Activated CD8-positive, alpha-beta memory T cell treated with anti-CD3 and anti-CD28 coated beads, Interleukin-2, amount 10 ng/mL, durations not matched to agents 7 days and 5 days (primary cell): ENCODE measurements at regions of chr7 and their contacts with region 1.

Region 1: DNA sequence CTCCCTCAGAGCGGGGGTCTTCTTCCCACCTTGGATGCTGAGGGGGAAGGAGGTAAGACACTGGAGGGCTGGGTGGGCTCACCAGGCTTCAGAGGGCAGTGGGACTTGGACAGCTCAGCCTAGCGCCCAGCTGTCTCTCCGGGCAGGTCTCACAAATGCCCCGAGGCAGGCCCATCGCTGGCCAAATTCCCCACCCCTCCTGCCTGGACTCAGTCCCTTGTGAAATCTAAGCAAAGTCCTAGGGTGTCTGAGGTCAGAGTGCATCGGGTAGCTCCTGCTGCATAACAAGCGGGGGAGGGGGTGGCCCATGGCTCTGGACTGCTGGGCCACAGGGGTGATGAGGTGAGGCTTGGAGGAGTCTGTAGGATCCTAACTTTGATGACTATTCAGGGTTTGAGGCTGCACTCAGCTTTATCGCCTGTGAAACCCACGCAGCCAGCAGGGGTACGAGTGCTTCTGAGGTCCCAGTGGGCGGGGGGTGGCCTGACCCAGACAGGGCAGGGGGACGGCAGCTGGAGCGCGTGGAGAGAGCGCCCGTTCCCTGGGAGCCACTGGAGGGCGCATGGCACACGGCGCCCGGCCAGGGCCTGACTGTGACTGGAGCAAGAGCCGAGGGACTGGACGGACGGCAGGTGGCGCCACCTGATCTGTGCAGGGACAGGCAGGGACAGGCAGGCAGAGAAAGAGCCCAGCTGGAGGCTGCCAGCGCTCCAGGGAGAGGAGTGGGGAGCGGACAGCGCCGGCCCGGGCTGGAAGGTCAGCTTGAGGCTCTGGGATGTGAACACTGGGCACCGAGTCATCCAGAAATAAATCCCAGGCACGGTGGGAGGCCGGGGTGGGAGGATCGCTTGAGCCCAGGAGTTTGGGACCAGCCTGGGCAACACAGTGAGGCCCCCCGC is 10.0 kb downstream of the CYP2W1 start:
- DNase-seq: peak; percentile 96
- ATAC-seq: peak; percentile 99
- H3K4me3 Mint-ChIP-seq: no peak overlapping the region
- H3K27ac Mint-ChIP-seq: no peak overlapping the region
- H3K4me1 Mint-ChIP-seq: peaks cover 6% of the 10 kb centered on the region
- H3K27me3 Mint-ChIP-seq: no peaks in the 10 kb centered on the region

Region 2: DNA sequence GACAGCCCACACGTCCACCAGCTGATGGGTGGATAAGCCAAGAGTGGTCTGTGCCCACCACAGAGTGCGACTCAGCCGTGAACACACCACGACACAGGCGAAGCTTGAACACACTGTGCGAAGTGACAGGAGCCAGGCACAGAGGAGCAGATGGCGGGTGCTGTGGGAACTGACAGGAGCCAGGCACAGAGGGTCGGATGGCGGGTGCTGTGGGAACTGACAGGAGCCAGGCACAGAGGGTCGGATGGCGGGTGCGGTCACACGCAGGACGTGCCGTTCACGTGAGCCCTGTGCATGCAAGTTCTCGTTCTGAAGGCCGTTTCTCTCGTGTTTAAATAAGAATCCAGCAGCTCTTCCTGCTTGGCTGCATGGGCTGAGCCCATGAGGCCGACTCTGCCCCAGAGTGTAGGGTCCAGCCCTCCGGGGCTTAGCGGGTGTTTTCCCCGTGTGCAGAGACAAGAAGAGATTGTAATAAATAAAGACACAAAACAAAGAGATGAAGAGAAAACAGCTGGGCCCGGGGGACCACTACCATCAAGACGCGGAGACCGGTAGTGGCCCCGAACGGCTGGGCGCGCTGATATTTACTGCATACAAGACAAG is 32.6 kb before region 1 on chr7:
- CTCF ChIA-PET with region 1: no interaction called
- DNase-seq: no peak
- ATAC-seq: no peak
- H3K4me3 Mint-ChIP-seq: no peak overlapping the region
- H3K27ac Mint-ChIP-seq: no peak overlapping the region
- H3K4me1 Mint-ChIP-seq: peaks cover 17% of the 10 kb centered on the region
- H3K27me3 Mint-ChIP-seq: peaks cover 6% of the 10 kb centered on the region

Region 3: GRCh38 chr7:981793-982510 is 11.0 kb before region 1 on chr7:
- CTCF ChIA-PET with region 1: interaction called, 37 read pairs
- DNase-seq: no peak
- ATAC-seq: no peak
- H3K4me3 Mint-ChIP-seq: no peak overlapping the region
- H3K27ac Mint-ChIP-seq: no peak overlapping the region
- H3K4me1 Mint-ChIP-seq: no peaks in the 10 kb centered on the region
- H3K27me3 Mint-ChIP-seq: no peaks in the 10 kb centered on the region

Region 4: GRCh38 chr7:1028031-1028770 is 35.2 kb after region 1 on chr7:
- CTCF ChIA-PET with region 1: interaction called, 18 read pairs
- DNase-seq: peak; percentile 91
- ATAC-seq: peak; percentile 92
- H3K4me3 Mint-ChIP-seq: peak overlapping the region; percentile 64
- H3K27ac Mint-ChIP-seq: peak overlapping the region; percentile 79
- H3K4me1 Mint-ChIP-seq: peaks cover 26% of the 10 kb centered on the region
- H3K27me3 Mint-ChIP-seq: no peaks in the 10 kb centered on the region

Region 5: DNA sequence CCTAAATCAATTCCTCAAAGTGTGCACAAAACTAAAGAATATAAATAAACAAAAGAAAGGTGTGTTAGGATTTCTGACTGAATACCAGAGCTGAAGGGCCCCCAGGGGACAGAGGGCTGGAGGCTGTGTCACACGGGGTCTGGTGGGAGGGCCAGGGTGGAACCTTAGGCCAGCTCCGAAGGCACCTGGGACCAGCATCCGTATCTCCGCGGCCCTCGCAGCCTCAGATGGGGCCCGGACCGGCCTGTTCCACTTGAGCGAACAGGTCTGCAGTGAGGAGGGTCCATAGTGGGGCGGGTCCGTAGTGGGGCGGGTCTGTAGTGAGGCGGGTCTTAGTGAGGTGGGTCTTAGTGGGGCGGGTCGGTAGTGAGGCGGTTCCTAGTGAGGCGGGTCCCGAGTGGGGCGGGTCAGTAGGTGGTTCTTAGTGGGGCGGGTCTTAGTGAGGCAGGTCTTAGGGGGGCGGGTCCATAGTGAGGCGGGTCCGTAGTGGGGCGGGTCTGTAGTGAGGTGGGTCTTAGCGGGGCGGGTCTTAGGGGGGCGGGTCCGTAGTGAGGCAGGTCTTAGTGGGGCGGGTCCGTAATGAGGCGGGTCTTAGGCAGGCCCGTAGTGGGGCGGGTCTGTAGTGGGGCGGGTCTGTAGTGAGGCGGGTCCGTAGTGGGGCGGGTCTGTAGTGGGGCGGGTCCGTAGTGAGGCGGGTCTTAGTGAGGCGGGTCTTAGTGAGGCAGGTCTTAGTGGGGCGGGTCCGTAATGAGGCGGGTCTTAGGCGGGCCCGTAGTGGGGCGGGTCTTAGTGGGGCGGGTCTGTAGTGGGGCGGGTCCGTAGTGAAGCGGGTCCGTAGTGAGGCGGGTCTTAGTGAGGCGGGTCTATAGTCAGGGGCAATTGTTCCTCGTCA is 66.5 kb after region 1 on chr7:
- CTCF ChIA-PET with region 1: interaction called, 322 read pairs
- DNase-seq: no peak
- ATAC-seq: peak; percentile 50
- H3K4me3 Mint-ChIP-seq: no peak overlapping the region
- H3K27ac Mint-ChIP-seq: no peak overlapping the region
- H3K4me1 Mint-ChIP-seq: peaks cover 6% of the 10 kb centered on the region
- H3K27me3 Mint-ChIP-seq: no peaks in the 10 kb centered on the region

Region 6: GRCh38 chr7:1086588-1087464 is 93.9 kb after region 1 on chr7:
- CTCF ChIA-PET with region 1: interaction called, 26 read pairs
- DNase-seq: peak; percentile 82
- ATAC-seq: peak; percentile 92
- H3K4me3 Mint-ChIP-seq: peak overlapping the region; percentile 56
- H3K27ac Mint-ChIP-seq: no peak overlapping the region
- H3K4me1 Mint-ChIP-seq: peaks cover 7% of the 10 kb centered on the region
- H3K27me3 Mint-ChIP-seq: peaks cover 6% of the 10 kb centered on the region

Region 7: DNA sequence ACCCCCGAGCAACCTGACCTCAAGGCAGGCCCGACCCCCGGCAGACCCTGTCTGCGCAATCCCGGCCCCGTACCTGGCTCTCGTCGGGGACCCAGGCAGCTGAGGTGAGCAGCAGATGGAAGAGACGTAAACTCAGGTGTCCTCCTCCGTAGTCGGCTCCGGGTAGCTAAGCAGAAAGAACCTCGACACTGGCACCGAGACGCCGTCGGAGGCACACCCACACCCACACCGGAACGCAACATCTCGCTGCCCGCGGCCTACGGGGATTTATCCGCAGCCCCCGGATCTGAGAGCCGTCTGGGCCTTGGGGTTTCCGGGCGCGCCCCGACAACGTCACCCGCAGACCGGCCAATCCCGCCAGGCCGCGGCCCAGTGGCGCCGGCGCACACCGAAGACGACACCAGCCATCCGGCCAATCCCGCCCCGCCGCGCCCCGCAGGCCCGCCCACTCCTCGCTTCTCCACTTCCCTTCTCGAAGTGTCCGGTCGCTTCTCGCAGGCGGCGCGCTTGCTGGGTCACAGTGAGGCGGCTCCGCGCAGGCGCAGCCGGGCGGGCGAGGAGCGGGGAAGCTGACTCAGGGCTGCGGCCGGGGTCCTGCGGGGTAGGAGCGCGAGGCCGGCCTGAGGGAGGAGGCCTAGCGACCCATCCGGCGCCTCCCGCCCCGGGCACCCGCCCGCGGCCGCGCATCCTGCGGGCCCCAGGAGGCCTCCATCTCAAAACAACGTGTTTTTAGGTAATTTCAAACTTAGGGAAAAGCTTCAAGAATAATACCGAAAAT is 167.1 kb after region 1 on chr7 and contains the start of gene ZFAND2A:
- CTCF ChIA-PET with region 1: interaction called, 10 read pairs
- DNase-seq: peak; percentile 99
- ATAC-seq: peak; percentile 98
- H3K4me3 Mint-ChIP-seq: peak within 1 kb of the TSS; percentile 86
- H3K27ac Mint-ChIP-seq: peak within 1 kb of the TSS; percentile 86
- H3K4me1 Mint-ChIP-seq: peaks cover 27% of the 10 kb centered on the region
- H3K27me3 Mint-ChIP-seq: no peaks in the 10 kb centered on the region
- total RNA-seq, gene ZFAND2A: 23.8 to 23.9 TPM

Region 8: GRCh38 chr7:1181640-1182039 is 188.7 kb after region 1 on chr7:
- CTCF ChIA-PET with region 1: interaction called, 69 read pairs
- DNase-seq: no peak
- ATAC-seq: no peak
- H3K4me3 Mint-ChIP-seq: no peak overlapping the region
- H3K27ac Mint-ChIP-seq: no peak overlapping the region
- H3K4me1 Mint-ChIP-seq: peaks cover 9% of the 10 kb centered on the region
- H3K27me3 Mint-ChIP-seq: peaks cover 41% of the 10 kb centered on the region